Mammary epithelial cell (primary cell): ENCODE measurements at regions of chr13 and their contacts with region 1.

Region 1: DNA sequence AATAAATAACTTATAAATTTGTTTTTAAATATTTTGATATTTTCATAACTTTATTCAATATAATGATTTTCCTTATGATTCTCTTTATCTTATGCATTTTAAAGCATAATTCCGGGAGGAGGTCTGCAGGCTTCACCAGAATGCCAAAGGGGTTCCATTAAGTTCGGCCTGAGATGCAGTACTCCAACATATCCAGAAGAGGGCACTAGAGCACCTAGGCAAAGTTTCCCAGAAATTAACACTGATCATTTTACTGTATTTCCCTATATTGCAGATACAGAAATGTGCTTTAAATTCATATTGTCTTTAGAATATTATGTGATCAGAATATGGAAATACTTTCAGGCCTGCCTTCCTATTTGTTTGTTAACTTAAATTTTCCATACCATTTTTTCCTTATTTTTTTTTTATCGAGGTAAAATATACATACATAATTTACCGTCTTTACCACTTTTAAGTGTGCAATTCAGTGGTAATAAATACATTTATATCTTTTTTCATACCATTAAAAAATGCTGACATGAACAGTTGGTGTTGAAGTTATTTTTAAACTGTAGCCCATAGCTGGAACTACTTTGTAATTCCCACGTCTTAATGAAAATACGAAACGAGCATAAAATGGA is 58.9 kb upstream of the TM9SF2 start:
- DNase-seq: peak; percentile 16
- H3K4me3 ChIP-seq: no peak overlapping the region
- H3K27ac ChIP-seq: no peak overlapping the region
- H3K4me1 ChIP-seq: no peaks in the 10 kb centered on the region
- H3K27me3 ChIP-seq: no peaks in the 10 kb centered on the region
- CTCF ChIP-seq: peak; percentile 85 to 98

Region 2: DNA sequence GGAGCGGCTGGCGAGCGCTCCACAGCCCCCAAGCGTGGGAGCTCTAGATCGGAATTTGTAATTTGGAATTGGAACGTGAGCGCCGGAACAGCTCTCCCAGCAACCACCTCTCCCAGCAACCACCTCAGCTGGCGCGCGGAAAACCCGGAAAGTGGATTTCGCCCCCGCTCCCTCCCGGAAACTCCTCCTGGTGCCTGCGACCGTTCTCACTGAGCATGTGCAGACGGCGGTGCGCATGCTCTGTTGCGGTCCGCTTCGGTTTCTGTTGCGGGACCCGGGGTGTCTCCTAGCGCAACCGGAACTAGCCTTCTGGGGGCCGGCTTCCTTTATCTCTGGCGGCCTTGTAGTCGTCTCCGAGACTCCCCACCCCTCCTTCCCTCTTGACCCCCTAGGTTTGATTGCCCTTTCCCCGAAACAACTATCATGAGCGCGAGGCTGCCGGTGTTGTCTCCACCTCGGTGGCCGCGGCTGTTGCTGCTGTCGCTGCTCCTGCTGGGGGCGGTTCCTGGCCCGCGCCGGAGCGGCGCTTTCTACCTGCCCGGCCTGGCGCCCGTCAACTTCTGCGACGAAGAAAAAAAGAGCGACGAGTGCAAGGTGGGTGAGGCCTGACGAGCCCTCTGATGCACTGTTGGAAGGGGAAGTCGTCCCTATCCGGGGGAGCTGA is 58.9 kb after region 1 on chr13 and contains the start of gene TM9SF2:
- CTCF ChIA-PET with region 1: interaction called, 5 read pairs
- dilution Hi-C with region 1: no loop called
- in situ Hi-C with region 1: no loop called
- intact Hi-C with region 1: loop called (anchors 1 kb)
- DNase-seq: peak; percentile 97
- H3K4me3 ChIP-seq: peak within 1 kb of the TSS; percentile 76 to 99 (median 79)
- H3K27ac ChIP-seq: peak within 1 kb of the TSS; percentile 84
- H3K4me1 ChIP-seq: peaks cover 29% of the 10 kb centered on the region
- H3K27me3 ChIP-seq: no peaks in the 10 kb centered on the region
- CTCF ChIP-seq: no peak
- total RNA-seq, gene TM9SF2: 87.8 to 143 TPM

Region 3: DNA sequence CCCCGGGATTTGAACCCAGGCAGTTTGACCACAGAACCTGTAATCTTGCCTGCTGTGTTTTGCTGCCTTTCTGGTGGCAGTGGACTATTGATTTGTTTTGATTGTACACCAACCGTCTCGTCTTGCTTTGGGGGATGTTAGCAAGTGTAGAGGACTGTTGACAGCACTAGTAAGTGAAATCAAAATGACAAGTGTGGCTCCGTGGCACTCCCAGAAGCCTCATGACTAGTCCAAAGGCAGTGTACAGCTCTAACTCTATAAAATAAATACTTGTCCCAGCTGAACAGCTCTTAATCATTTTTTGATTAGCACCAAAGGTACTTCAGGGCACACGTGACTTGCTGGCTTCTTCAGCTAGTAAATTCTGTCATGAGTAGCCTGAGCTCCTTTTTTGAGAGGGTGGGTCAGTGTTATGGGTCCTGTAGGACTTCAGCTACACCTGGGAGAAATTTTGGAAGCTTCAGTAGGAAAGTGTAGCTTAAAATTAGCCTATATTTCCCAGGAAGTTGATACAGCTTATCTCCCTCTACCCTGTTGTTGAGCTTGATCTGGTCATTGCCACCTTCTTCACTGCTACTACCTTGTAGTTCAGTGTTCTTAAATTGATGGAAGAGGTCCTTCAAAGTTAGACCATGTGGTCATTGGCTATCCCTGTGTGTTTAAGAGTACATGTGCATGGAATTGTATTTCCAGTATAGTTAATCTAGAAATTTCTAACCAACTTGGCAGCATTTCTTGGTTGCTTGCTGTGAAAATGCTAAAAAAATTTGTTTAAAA is 74.0 kb after region 1 on chr13:
- CTCF ChIA-PET with region 1: no interaction called
- dilution Hi-C with region 1: no loop called
- in situ Hi-C with region 1: loop called in 1 of 2 experiments (anchors 10 kb)
- intact Hi-C with region 1: no loop called
- DNase-seq: no peak
- H3K4me3 ChIP-seq: no peak overlapping the region
- H3K27ac ChIP-seq: no peak overlapping the region
- H3K4me1 ChIP-seq: peaks cover 10% of the 10 kb centered on the region
- H3K27me3 ChIP-seq: no peaks in the 10 kb centered on the region
- CTCF ChIP-seq: no peak

Region 4: DNA sequence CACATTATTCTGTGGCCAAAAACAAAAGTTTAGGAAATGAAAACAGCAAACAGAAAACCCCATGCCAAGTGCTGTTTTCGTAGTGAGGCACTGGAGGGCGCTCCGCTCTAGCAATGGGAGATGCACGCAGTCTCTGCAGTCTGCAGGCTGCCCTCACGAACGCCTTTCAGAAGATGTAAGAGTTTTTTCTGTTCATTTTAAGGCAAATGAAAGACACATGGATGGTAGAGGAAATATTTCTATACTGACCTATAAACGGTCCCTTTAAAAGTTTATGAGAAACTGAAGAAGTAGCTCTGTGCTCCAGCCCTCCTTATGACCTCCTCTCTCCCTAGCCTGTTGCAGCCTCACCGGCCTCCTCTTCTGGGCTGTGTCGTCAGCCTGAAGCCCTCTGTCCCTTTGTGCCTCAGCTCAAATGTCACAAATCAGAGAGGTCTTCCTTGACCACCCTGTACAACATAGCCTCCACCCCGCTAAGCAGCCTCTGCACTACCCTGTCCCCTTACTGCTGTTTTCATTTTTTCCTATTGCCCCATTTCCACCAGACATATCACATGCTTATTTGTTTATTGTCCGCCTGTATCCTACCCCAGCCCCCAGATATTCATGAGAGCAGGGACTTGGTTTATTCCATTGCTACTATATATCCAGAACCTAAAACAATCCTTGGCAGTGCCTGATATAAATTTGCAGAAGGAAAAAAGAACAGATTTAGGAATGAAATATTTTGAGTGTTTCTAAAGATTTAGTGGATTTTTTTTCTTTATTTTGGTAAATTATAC is 175.3 kb after region 1 on chr13:
- CTCF ChIA-PET with region 1: no interaction called
- dilution Hi-C with region 1: no loop called
- in situ Hi-C with region 1: no loop called
- intact Hi-C with region 1: loop called (anchors 1 kb)
- DNase-seq: no peak
- H3K4me3 ChIP-seq: no peak overlapping the region
- H3K27ac ChIP-seq: no peak overlapping the region
- H3K4me1 ChIP-seq: peaks cover 22% of the 10 kb centered on the region
- H3K27me3 ChIP-seq: no peaks in the 10 kb centered on the region
- CTCF ChIP-seq: peak; percentile 73 to 79

Region 5: GRCh38 chr13:99895223-99895994 is 453.0 kb after region 1 on chr13:
- CTCF ChIA-PET with region 1: no interaction called
- dilution Hi-C with region 1: no loop called
- in situ Hi-C with region 1: no loop called
- intact Hi-C with region 1: loop called (anchors 10 kb)
- DNase-seq: no peak
- H3K4me3 ChIP-seq: peak overlapping the region in 1 of 3 experiments; percentile 18
- H3K27ac ChIP-seq: no peak overlapping the region
- H3K4me1 ChIP-seq: peaks cover 4% of the 10 kb centered on the region
- H3K27me3 ChIP-seq: peaks cover 24% of the 10 kb centered on the region
- CTCF ChIP-seq: no peak